B cell (primary cell): ENCODE measurements at regions of chr17 and their contacts with region 1.

Region 1: GRCh38 chr17:42997984-42998938 is at the start of gene RPL27:
- DNase-seq: peak; percentile 99
- ATAC-seq: peak; percentile 94
- H3K4me3 ChIP-seq: peak within 1 kb of the TSS; percentile 70 to 94 (median 84)
- H3K4me3 Mint-ChIP-seq: peak within 1 kb of the TSS; percentile 96
- H3K27ac ChIP-seq: peak within 1 kb of the TSS; percentile 89 to 96
- H3K27ac Mint-ChIP-seq: peak within 1 kb of the TSS; percentile 88
- H3K4me1 ChIP-seq: peaks cover 20 to 22% of the 10 kb centered on the region in 2 donors
- H3K4me1 Mint-ChIP-seq: peaks cover 37% of the 10 kb centered on the region
- H3K27me3 ChIP-seq: no peaks in the 10 kb centered on the region
- H3K27me3 Mint-ChIP-seq: no peaks in the 10 kb centered on the region
- CTCF ChIP-seq: peak; percentile 89
- total RNA-seq, gene RPL27: 925 and 1,087 TPM in 2 replicates

Region 2: DNA sequence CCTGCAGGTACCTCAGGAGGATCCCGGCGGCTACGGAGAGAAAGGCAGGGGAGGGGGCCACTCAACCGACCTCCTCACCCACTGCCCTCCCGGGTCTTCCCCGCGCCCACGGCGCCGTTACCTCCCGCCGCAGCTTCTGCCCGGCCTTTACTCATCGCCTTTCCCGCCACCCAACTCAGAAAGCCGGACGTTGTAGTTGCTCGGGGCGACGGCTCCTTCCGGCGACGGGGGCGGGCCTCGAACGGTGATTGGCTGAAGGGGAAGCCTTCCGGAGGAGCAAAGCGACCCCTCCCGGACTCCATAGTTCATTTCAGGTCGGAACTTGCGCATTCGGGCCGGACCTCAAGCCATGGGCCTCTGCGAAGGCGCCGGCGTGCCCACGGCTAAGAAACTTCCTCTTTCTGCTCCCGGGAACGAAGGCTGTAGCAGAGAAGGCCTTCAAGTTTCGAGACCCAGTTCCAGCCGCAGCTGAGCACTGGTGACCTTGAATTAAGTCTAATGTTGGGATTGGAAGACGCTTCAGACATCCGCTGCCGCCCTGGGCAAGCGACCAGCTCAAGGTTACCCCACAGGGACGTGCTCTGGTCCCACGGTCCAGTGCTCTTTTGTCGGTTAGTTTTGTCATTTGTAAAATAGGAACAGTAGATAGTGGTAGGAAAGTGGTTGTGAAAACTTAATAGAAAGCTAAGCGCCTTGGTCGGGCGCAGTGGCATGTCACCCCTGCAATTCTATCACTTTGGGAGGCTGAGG is 420.6 kb before region 1 on chr17 and contains the start of gene PSMC3IP:
- CTCF ChIA-PET with region 1: interaction called, 15 read pairs
- POLR2A ChIA-PET with region 1: interaction called, 6 read pairs
- intact Hi-C with region 1: loop called (anchors 10 kb)
- DNase-seq: peak; percentile 94
- ATAC-seq: peak; percentile 93
- H3K4me3 ChIP-seq: peak within 1 kb of the TSS; percentile 56 to 82 (median 74)
- H3K4me3 Mint-ChIP-seq: peak within 1 kb of the TSS; percentile 99
- H3K27ac ChIP-seq: peak within 1 kb of the TSS; percentile 45 to 72
- H3K27ac Mint-ChIP-seq: peak within 1 kb of the TSS; percentile 99
- H3K4me1 ChIP-seq: peaks cover 12 to 30% of the 10 kb centered on the region in 2 donors
- H3K4me1 Mint-ChIP-seq: peaks cover 42% of the 10 kb centered on the region
- H3K27me3 ChIP-seq: no peaks in the 10 kb centered on the region
- H3K27me3 Mint-ChIP-seq: no peaks in the 10 kb centered on the region
- CTCF ChIP-seq: no peak
- total RNA-seq, gene PSMC3IP: 7.9 and 10.4 TPM in 2 replicates

Region 3: GRCh38 chr17:42804918-42805367 is 193.3 kb before region 1 on chr17:
- CTCF ChIA-PET with region 1: no interaction called
- POLR2A ChIA-PET with region 1: interaction called, 12 read pairs
- intact Hi-C with region 1: no loop called
- DNase-seq: no peak
- ATAC-seq: no peak
- H3K4me3 ChIP-seq: no peak overlapping the region
- H3K4me3 Mint-ChIP-seq: no peak overlapping the region
- H3K27ac ChIP-seq: no peak overlapping the region
- H3K27ac Mint-ChIP-seq: no peak overlapping the region
- H3K4me1 ChIP-seq: no peaks in the 10 kb centered on the region
- H3K4me1 Mint-ChIP-seq: no peaks in the 10 kb centered on the region
- H3K27me3 ChIP-seq: no peaks in the 10 kb centered on the region
- H3K27me3 Mint-ChIP-seq: peaks cover 5% of the 10 kb centered on the region
- CTCF ChIP-seq: no peak

Region 4: DNA sequence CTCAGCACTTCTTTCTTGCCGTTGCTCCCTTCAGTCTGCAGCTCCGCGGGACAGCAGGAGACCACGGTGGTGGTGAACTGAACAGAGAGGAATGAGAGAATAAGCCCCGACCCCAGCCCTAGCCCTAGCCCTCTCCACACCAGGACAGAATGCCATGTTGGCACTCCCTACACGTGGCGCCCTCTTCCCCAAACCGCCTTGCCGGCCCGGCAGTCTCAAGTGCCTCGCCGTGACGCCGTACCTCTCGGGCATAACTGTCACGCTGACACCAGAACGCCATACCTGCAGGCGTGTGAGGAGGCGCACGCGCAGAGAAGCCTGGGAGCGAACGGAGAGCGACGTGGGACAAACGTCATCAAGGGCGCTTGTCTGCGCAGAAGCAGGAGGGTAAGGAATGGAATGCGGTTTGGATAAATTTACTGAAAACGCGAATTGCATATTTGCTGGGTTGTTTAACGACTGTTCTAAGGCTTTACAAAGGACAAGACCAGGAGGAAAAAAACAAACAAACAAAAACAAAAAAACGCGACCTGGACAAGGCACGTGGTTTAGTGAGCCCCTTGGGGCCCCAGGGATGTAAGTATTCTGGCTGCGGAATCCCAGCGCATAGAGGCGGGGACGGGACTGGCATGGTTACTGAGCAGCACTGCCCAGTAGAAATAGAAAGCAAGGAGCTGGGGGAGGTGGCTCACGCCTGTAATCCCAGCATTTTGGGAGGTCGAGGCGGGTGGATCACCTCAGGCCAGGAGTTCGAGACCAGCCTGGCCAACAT is 33.9 kb before region 1 on chr17 and contains the start of gene AARSD1:
- CTCF ChIA-PET with region 1: interaction called, 16 read pairs
- POLR2A ChIA-PET with region 1: interaction called, 15 read pairs
- intact Hi-C with region 1: loop called (anchors 1 kb)
- DNase-seq: peak; percentile 95
- ATAC-seq: peak; percentile 97
- H3K4me3 ChIP-seq: peak within 1 kb of the TSS; percentile 56 to 97 (median 83)
- H3K4me3 Mint-ChIP-seq: peak within 1 kb of the TSS; percentile 89
- H3K27ac ChIP-seq: peak within 1 kb of the TSS; percentile 63 to 88
- H3K27ac Mint-ChIP-seq: peak within 1 kb of the TSS; percentile 90
- H3K4me1 ChIP-seq: peaks cover 8 to 14% of the 10 kb centered on the region in 2 donors
- H3K4me1 Mint-ChIP-seq: peaks cover 17% of the 10 kb centered on the region
- H3K27me3 ChIP-seq: no peaks in the 10 kb centered on the region
- H3K27me3 Mint-ChIP-seq: no peaks in the 10 kb centered on the region
- CTCF ChIP-seq: no peak
- total RNA-seq, gene AARSD1: 56.5 and 67.4 TPM in 2 replicates

Region 5: GRCh38 chr17:43125133-43125966 is 127.1 kb after region 1 on chr17 and contains the start of gene BRCA1:
- CTCF ChIA-PET with region 1: no interaction called
- POLR2A ChIA-PET with region 1: interaction called, 3 read pairs
- intact Hi-C with region 1: loop called (anchors 1 kb)
- DNase-seq: peak; percentile 98
- ATAC-seq: peak; percentile 100
- H3K4me3 ChIP-seq: peak within 1 kb of the TSS; percentile 68 to 97 (median 92)
- H3K4me3 Mint-ChIP-seq: peak within 1 kb of the TSS; percentile 91
- H3K27ac ChIP-seq: peak within 1 kb of the TSS; percentile 60 to 82
- H3K27ac Mint-ChIP-seq: peak within 1 kb of the TSS; percentile 91
- H3K4me1 ChIP-seq: peaks cover 12 to 24% of the 10 kb centered on the region in 2 donors
- H3K4me1 Mint-ChIP-seq: peaks cover 31% of the 10 kb centered on the region
- H3K27me3 ChIP-seq: no peaks in the 10 kb centered on the region
- H3K27me3 Mint-ChIP-seq: no peaks in the 10 kb centered on the region
- CTCF ChIP-seq: no peak
- total RNA-seq, gene BRCA1: 7.2 and 9.0 TPM in 2 replicates

Region 6: GRCh38 chr17:43316522-43317142 is 318.4 kb after region 1 on chr17:
- CTCF ChIA-PET with region 1: interaction called, 4 read pairs
- POLR2A ChIA-PET with region 1: interaction called, 10 read pairs
- intact Hi-C with region 1: no loop called
- DNase-seq: peak; percentile 78
- ATAC-seq: no peak
- H3K4me3 ChIP-seq: peak overlapping the region in 1 of 5 experiments; percentile 25
- H3K4me3 Mint-ChIP-seq: peak overlapping the region; percentile 29
- H3K27ac ChIP-seq: peak overlapping the region in 1 of 2 donors; percentile 46
- H3K27ac Mint-ChIP-seq: no peak overlapping the region
- H3K4me1 ChIP-seq: peaks cover 0 to 4% of the 10 kb centered on the region in 2 donors
- H3K4me1 Mint-ChIP-seq: peaks cover 16% of the 10 kb centered on the region
- H3K27me3 ChIP-seq: no peaks in the 10 kb centered on the region
- H3K27me3 Mint-ChIP-seq: no peaks in the 10 kb centered on the region
- CTCF ChIP-seq: no peak

Region 7: DNA sequence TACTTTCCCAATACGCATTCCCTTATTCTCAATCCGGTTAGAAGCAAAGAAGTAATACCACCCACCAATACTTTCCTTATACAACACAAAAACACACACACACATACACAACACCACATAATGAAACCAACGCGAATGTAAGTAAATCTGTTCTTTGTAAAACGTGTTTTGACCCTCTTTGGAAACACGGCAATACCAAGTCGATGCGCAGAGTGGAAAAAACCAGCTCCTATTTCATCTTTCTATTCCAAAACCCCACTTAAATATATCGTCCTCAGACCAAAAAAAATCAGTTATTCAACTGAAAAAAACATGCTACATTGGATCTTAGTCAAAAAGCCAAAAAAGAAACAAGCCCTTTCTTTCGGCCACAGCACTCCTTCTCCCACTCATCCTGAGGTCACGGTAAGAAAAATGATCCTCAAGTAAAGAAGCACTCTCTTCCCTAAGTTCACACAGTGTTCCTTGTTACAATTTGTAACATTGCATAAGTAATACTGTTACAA is 369.5 kb after region 1 on chr17:
- CTCF ChIA-PET with region 1: interaction called, 6 read pairs
- POLR2A ChIA-PET with region 1: interaction called, 18 read pairs
- intact Hi-C with region 1: no loop called
- DNase-seq: no peak
- ATAC-seq: peak; percentile 40
- H3K4me3 ChIP-seq: peak overlapping the region; percentile 59 to 84 (median 64)
- H3K4me3 Mint-ChIP-seq: peak overlapping the region; percentile 99
- H3K27ac ChIP-seq: peak overlapping the region; percentile 96 to 98
- H3K27ac Mint-ChIP-seq: peak overlapping the region; percentile 100
- H3K4me1 ChIP-seq: peaks cover 33 to 50% of the 10 kb centered on the region in 2 donors
- H3K4me1 Mint-ChIP-seq: peaks cover 44% of the 10 kb centered on the region
- H3K27me3 ChIP-seq: no peaks in the 10 kb centered on the region
- H3K27me3 Mint-ChIP-seq: no peaks in the 10 kb centered on the region
- CTCF ChIP-seq: no peak